ENCODE measurements at regions of chr4 and their contacts with region 1.

Region 1: DNA sequence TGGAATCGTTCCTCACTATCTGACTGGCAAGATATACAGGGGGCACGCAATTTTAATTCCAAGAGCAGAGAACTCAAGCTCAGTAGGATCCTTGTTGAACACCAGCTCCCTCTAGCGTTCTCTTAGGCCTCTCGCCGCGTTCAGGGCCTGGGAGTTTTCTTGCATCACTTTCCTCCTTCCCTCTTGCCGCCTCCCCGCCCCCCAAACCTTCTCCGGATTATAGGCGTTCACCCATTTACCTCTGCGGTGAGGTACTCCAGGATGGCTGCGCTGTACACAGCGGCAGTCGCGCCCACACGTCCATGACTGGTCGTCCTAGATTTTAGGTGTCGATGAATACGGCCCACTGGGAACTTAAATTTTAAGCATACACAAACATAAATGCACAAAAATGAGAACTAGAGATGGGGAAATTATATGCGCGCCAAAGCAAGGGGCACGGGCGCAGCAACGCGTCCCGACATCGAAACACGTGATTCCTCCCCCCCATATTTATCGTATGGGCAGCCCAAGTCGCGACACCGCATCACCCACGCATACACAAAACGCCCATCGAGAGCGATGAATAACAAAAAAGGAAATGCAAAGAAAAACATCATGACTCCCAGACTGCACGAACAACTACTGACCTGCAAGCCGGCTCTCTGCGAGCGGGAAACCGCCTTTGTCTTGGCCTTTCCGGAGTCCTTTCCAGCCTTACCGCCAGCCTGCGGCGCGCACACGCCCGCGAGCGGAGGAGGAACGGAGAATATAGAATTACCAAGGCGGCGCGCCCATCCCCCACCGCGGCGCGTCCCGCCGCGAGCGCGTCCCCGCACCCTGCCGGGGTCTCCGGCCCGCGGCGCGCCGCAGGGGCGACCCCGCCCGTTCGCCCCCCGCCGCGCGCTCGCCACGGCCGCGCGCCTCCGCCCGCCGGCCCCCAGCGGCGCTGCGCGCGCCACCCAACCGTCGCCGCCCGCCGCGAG is 759 bp downstream of the H2AZ1 start:
- DNase-seq: peak; percentile 96
- H3K4me3 Mint-ChIP-seq: no peak overlapping the region
- H3K27ac Mint-ChIP-seq: no peak overlapping the region
- H3K4me1 Mint-ChIP-seq: peaks cover 31% of the 10 kb centered on the region
- H3K27me3 Mint-ChIP-seq: no peaks in the 10 kb centered on the region

Region 2: GRCh38 chr4:98143001-98143899 is 1806.1 kb before region 1 on chr4 and contains the start of gene STPG2:
- CTCF ChIA-PET with region 1: no interaction called
- intact Hi-C with region 1: loop called (anchors 5 kb)
- DNase-seq: peak; percentile 95
- H3K4me3 Mint-ChIP-seq: peak within 1 kb of the TSS; percentile 96
- H3K27ac Mint-ChIP-seq: peak within 1 kb of the TSS; percentile 99
- H3K4me1 Mint-ChIP-seq: peaks cover 19% of the 10 kb centered on the region
- H3K27me3 Mint-ChIP-seq: no peaks in the 10 kb centered on the region
- total RNA-seq, gene STPG2: not detected

Region 3: DNA sequence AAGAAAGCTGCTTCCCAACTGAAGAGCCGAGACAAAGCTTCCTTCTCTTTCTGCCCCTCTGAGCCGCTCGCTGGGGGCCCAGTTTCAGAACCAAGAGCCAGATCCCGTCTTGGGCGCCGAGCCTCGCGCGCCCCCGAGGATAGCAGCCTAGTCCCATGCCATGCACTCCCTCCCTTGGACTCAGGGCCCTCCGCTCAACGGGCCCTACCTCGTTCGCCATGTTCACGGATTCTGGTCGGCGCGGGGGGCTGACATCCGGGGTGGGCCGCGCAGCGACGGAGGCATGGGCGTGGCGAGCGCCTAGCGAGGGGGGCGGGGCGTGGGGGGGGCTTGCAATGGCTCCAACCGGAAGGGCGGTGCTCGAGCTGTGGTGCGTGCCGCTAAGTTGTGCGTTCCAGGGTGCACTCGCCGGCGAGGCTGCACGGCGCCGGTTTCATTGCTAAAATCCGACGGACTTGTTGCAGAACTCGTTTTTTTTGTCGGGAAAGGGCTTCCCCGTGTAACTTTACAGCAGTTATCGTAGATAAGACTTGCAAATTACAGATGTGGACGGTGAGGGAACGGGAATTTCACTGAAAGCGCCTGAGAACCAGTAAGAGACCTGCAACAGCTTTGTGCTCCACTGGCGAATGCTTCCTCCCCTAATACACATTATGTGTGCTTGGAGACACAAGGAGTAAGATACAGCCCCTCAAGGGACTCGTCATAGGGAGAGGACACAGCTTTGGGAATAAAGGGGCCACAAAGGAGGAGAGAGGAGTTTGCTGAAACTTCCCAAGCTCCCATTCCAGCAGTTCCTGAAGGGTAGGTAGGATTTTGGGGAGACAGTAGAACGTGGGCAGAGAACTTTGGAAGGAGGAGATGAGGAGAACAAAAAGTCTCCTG is 860.6 kb before region 1 on chr4 and contains the start of gene ADH5:
- CTCF ChIA-PET with region 1: no interaction called
- intact Hi-C with region 1: loop called (anchors 2 kb)
- DNase-seq: peak; percentile 92
- H3K4me3 Mint-ChIP-seq: peak within 1 kb of the TSS; percentile 96
- H3K27ac Mint-ChIP-seq: peak within 1 kb of the TSS; percentile 95
- H3K4me1 Mint-ChIP-seq: peaks cover 32% of the 10 kb centered on the region
- H3K27me3 Mint-ChIP-seq: no peaks in the 10 kb centered on the region
- total RNA-seq, gene ADH5: 94.3 to 99.9 TPM

Region 4: GRCh38 chr4:99438405-99438780 is 510.9 kb before region 1 on chr4:
- CTCF ChIA-PET with region 1: no interaction called
- intact Hi-C with region 1: no loop called
- DNase-seq: no peak
- H3K4me3 Mint-ChIP-seq: no peak overlapping the region
- H3K27ac Mint-ChIP-seq: no peak overlapping the region
- H3K4me1 Mint-ChIP-seq: no peaks in the 10 kb centered on the region
- H3K27me3 Mint-ChIP-seq: no peaks in the 10 kb centered on the region

Region 5: DNA sequence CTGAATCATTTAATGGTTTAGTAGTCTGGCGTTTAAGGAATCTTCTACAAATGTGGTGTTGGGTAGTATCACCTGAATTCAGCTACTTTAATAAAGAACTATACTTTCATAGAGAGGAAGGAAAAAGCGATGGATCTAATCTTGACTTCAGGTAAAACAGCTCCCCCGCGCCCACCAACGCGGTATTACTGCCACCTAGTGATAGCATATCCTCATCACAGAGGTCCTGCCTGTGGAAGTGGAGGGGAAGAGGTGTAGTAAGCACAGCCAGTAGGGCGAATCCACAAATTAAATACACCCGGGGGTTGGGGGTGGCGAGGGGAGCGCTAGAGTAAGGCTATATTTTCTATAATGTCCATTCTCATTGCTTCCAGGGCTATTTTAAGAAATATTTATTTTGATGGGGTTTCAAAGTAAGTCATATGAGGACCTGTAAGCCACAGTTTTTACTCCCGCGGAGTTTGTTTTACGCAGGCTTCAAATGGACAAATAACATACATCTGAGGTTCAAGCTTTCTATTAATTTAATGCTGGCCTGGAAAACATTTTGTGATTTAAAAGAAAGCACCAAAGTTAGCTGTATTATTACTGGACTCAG is 141.0 kb before region 1 on chr4:
- CTCF ChIA-PET with region 1: interaction called, 9 read pairs
- intact Hi-C with region 1: loop called (anchors 1 kb)
- DNase-seq: peak; percentile 87
- H3K4me3 Mint-ChIP-seq: no peak overlapping the region
- H3K27ac Mint-ChIP-seq: no peak overlapping the region
- H3K4me1 Mint-ChIP-seq: peaks cover 14% of the 10 kb centered on the region
- H3K27me3 Mint-ChIP-seq: peaks cover 8% of the 10 kb centered on the region

Region 6: GRCh38 chr4:99894161-99894997 is 54.9 kb before region 1 on chr4 and contains the start of gene LAMTOR3:
- CTCF ChIA-PET with region 1: interaction called, 13 read pairs
- intact Hi-C with region 1: loop called (anchors 1 kb)
- DNase-seq: peak; percentile 92
- H3K4me3 Mint-ChIP-seq: peak within 1 kb of the TSS; percentile 95
- H3K27ac Mint-ChIP-seq: peak within 1 kb of the TSS; percentile 92
- H3K4me1 Mint-ChIP-seq: peaks cover 32% of the 10 kb centered on the region
- H3K27me3 Mint-ChIP-seq: no peaks in the 10 kb centered on the region
- total RNA-seq, gene LAMTOR3: 24.9 to 26.9 TPM

Region 7: DNA sequence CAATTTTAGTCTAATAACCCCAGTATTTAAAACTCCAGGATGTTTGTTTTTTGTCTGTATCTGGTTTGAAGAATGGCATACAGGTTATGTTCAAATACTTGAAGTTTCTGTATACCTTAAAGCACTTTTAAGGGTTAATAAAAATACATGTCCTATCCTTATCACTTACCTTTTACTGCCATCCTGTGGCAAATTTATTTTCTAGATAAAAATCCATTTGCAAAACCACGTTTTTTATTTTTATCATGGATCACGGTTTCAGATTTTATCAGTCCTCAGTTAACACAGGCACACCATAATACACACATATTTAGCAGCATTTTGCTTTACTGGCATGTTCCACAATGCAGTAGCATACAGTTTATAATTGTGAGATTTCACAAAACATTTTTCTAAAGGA is 114.0 kb after region 1 on chr4:
- CTCF ChIA-PET with region 1: no interaction called
- intact Hi-C with region 1: loop called (anchors 1 kb)
- DNase-seq: no peak
- H3K4me3 Mint-ChIP-seq: no peak overlapping the region
- H3K27ac Mint-ChIP-seq: no peak overlapping the region
- H3K4me1 Mint-ChIP-seq: no peaks in the 10 kb centered on the region
- H3K27me3 Mint-ChIP-seq: peaks cover 20% of the 10 kb centered on the region

Region 8: DNA sequence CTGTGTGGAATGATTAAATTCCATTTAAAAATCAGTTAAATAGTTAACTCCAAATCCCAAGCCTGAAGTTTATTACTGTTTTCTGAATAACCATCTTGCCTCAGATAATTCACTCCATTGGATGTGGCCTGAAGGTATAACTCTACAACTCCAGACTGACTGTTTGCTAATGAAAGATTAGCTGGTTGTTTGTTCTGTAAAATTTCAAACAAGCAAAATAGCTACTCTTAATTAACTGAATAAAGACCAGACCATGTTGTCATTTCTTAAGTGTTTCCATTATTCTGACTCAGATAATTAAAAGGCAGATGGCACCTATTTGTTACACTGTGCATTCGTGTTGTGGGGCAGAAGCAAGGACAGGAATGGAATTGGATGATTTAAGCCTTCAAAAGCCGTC is 319.5 kb after region 1 on chr4:
- CTCF ChIA-PET with region 1: no interaction called
- intact Hi-C with region 1: no loop called
- DNase-seq: no peak
- H3K4me3 Mint-ChIP-seq: no peak overlapping the region
- H3K27ac Mint-ChIP-seq: no peak overlapping the region
- H3K4me1 Mint-ChIP-seq: no peaks in the 10 kb centered on the region
- H3K27me3 Mint-ChIP-seq: peaks cover 8% of the 10 kb centered on the region

Region 9: DNA sequence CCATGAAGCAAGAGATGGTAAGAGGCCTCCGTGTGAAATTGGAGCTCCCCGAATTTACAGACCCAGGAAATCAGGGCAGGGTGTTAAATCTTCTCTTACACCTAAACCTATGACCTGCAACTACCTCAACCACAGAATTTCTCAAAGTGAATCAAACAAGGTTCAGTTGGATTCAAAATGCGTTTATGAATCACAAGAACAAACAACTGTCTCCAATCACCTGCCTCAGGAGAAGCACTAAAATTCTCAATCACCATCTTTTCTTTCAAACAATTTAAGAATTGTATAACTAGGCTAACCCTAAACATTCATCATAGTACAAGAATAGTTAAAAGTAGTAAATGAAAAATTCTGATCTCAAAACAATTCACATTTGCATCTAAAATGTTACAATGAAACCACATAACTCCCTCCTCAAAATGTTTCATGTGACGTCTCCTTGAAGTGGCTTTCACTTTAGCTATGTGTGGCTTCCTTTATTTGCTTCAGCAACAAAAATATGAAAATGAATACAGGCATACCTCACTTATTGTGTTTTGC is 1378.8 kb after region 1 on chr4:
- CTCF ChIA-PET with region 1: no interaction called
- intact Hi-C with region 1: loop called (anchors 2 kb)
- DNase-seq: peak; percentile 52
- H3K4me3 Mint-ChIP-seq: no peak overlapping the region
- H3K27ac Mint-ChIP-seq: peak overlapping the region; percentile 73
- H3K4me1 Mint-ChIP-seq: peaks cover 28% of the 10 kb centered on the region
- H3K27me3 Mint-ChIP-seq: peaks cover 25% of the 10 kb centered on the region